Aorta (tissue), 5 donors: ENCODE measurements at regions of chr9 and their contacts with region 1.

Region 1: DNA sequence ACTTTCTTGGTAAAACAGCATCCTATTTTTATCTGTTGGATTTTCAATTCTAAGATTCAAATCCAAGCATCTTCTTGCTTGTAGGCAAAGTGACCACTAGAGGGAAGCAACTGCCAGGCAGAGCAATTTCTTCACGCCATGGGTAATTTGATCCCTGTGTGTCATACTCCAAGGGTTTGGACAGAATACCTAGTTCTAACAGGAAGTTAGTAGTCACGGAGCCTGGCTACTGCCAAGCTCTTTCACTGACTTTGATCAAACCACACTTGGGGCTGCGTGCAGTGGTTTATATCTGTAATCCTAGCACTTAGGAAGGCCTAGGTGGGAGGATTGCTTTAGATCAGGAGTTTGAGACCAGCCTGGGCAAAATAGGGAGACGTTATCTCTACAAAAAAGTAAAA is 473.6 kb upstream of the TNC start:
- DNase-seq: peak in 1 of 2 donors; percentile 80
- ATAC-seq: peak; percentile 93
- H3K4me3 ChIP-seq: no peak overlapping the region
- H3K27ac ChIP-seq: peak overlapping the region in 1 of 2 donors; percentile 66
- H3K4me1 ChIP-seq: peaks cover 3 to 5% of the 10 kb centered on the region in 2 donors
- H3K27me3 ChIP-seq: no peaks in the 10 kb centered on the region

Region 2: DNA sequence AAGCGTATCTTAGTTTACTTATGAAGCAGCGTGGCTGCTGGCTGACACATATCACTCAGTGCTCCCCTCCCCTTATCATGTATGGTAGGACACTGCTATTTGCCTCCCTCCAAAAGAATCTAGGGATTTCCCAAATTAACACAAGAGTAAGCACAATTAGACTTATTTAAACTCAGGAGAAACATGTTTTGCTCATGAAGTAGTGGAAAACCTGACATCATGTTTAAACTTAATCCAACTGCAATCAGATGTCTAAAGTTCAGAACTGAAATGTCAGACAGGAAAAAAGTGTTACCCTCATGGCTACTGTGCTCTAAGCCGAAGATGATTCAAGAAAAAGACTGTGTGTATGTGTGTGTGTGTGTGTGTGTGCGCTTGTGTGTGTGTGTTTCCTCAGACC is 149.5 kb before region 1 on chr9:
- intact Hi-C with region 1: no loop called
- DNase-seq: no peak
- ATAC-seq: peak; percentile 80
- H3K4me3 ChIP-seq: no peak overlapping the region
- H3K27ac ChIP-seq: peak overlapping the region; percentile 77 to 79
- H3K4me1 ChIP-seq: peaks cover 0 to 3% of the 10 kb centered on the region in 2 donors
- H3K27me3 ChIP-seq: no peaks in the 10 kb centered on the region

Region 3: GRCh38 chr9:115694014-115694413 is 102.4 kb after region 1 on chr9:
- intact Hi-C with region 1: loop called in 1 of 2 experiments (anchors 5 kb)
- DNase-seq: no peak
- ATAC-seq: peak; percentile 37
- H3K4me3 ChIP-seq: no peak overlapping the region
- H3K27ac ChIP-seq: no peak overlapping the region
- H3K4me1 ChIP-seq: no peaks in the 10 kb centered on the region
- H3K27me3 ChIP-seq: no peaks in the 10 kb centered on the region

Region 4: DNA sequence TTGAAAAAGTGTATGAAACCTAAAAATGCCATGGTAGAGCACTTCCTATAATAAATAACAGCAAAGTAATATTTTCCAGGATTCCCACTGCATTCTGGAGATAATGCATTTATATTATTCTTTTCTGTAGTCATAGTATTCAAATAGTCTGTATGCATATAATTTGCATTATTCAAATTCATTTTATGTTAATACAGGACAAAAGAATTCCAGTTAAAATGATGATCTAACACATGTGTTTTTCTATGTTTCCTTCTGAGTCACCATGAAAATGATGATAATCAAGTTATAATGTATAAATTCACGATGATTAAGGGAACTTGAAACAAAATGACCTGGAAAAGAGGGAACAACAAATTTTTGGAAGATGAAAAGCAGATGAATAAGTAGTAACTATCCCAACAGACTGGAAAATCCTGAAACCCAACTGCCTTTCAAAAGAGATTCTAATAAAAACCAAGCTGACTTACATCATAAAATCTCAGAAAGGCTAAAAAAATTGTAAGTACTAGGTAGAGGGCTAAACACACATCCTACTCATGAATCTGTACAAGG is 203.4 kb after region 1 on chr9:
- intact Hi-C with region 1: loop called in 1 of 2 experiments (anchors 5 kb)
- DNase-seq: no peak
- ATAC-seq: no peak
- H3K4me3 ChIP-seq: no peak overlapping the region
- H3K27ac ChIP-seq: no peak overlapping the region
- H3K4me1 ChIP-seq: no peaks in the 10 kb centered on the region
- H3K27me3 ChIP-seq: no peaks in the 10 kb centered on the region

Region 5: DNA sequence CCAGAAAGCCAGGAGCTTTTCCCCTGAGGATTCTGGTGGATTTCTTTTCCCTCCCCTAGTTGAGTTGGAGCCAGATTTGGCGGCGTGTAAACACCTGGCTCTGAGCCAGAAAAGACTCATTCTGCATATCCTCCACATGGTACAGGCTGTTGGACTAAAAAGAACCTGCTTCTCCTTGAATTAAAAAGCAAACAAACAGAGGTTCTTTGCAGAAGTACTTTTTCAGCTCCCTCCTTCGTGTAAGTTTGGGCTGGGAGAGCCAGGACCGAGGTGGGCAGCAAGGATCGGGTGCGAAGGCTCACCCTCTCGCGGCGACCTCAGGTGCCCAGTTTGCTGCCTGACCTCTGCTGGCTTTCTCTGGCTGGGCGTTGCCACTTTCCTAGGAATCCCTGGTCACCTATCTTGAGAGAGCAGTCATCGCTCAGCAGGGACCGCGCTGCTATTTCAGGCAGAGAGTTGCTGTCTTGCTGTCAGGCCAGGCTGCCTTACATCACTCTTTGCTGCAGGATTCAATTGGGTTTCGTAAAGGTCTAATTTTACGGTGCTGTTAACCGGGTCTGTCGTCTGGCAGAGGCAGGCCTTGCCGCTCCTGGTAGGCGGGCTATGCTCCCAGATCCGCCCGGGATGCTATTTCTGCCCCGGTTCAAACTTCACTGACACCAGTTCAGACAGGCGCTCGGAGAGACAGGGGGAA is 565.2 kb after region 1 on chr9:
- intact Hi-C with region 1: loop called (anchors 5 kb)
- DNase-seq: peak; percentile 74 to 84
- ATAC-seq: peak; percentile 71
- H3K4me3 ChIP-seq: peak overlapping the region; percentile 0 to 25
- H3K27ac ChIP-seq: peak overlapping the region; percentile 28 to 78
- H3K4me1 ChIP-seq: no peaks in the 10 kb centered on the region
- H3K27me3 ChIP-seq: no peaks in the 10 kb centered on the region

Region 6: DNA sequence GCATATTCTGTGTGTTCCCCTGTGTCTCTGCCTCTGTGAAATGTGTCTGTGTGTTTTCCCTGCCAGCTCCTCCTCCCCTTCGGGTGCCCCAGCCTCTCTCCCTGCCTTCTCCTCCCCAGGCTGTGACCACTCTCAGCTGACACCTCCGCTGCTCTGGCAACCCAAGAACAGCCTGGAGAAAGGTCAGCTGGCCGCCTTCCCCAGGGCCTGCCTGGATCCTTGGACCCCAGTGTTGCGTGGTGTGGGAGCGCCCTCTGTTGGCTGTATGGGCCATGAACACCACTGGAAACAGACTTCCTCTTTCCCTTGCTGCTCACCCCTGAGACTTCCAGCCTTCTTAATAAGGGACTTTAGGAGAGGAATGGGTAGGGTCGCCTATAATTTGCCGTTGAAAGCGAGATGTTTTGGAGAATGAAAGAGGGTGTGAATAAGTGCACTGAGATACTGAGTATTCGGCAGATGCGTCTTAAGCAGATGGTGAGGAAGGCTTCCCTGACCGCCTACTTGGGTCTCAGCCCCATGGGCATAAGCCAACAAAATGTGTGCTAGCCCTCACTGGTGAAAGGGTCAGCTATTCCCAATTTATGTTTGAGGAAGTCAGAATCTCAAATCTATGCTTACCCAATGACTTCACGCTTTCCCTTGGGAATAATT is 980.6 kb after region 1 on chr9:
- intact Hi-C with region 1: loop called (anchors 2 to 5 kb)
- DNase-seq: peak; percentile 87 to 93
- ATAC-seq: peak; percentile 88
- H3K4me3 ChIP-seq: no peak overlapping the region
- H3K27ac ChIP-seq: no peak overlapping the region
- H3K4me1 ChIP-seq: no peaks in the 10 kb centered on the region
- H3K27me3 ChIP-seq: no peaks in the 10 kb centered on the region